Stomach (tissue), 19 donors: ENCODE measurements at regions of chr15 and their contacts with region 1.

Region 1: GRCh38 chr15:74373731-74374647 is 6.5 kb upstream of the CYP11A1 start:
- DNase-seq: peak; percentile 97
- H3K4me3 ChIP-seq: peak overlapping the region; percentile 54 to 71 (median 62)
- H3K27ac ChIP-seq: peak overlapping the region; percentile 35 to 68 (median 43)
- H3K4me1 ChIP-seq: peaks cover 12 to 23% (median 21%) of the 10 kb centered on the region in 4 donors
- H3K27me3 ChIP-seq: peaks cover 0 to 30% (median 0%) of the 10 kb centered on the region in 3 donors
- CTCF ChIP-seq: peak in 5 of 7 experiments; percentile 74 to 85 (median 81)
- EP300 ChIP-seq: no peak
- POLR2A ChIP-seq: no peak

Region 2: DNA sequence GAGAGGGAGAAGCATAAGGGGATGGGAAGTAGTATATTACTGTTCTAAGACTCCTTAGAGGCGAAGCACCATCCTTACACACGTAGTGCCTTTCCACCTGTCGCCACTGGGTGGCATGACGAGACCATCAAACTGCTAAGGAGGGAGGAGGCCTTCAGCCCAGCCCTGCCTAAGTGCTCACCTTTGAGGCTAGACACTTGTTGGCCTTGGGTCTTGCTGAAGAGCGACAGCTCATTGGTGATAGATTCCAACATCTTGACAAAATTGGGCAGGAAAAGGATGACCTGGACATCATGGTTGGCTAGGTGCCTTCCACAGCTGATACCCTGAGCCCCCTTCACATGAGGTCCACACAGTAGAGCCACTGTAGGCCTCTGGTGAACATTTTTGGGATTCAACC is 261.2 kb after region 1 on chr15:
- intact Hi-C with region 1: loop called (anchors 10 kb)
- DNase-seq: peak; percentile 72 to 86
- H3K4me3 ChIP-seq: no peak overlapping the region
- H3K27ac ChIP-seq: no peak overlapping the region
- H3K4me1 ChIP-seq: no peaks in the 10 kb centered on the region
- H3K27me3 ChIP-seq: no peaks in the 10 kb centered on the region
- CTCF ChIP-seq: peak in 5 of 7 experiments; percentile 82 to 92 (median 89)
- EP300 ChIP-seq: no peak
- POLR2A ChIP-seq: no peak